ENCODE measurements at regions of chr2 and their contacts with region 1.

Region 1: GRCh38 chr2:177195194-177195593 is 17.4 kb upstream of the HNRNPA3 start:
- DNase-seq: no peak
- ATAC-seq: peak in 2 of 4 experiments; percentile 46 to 62
- H3K4me3 ChIP-seq: no peak overlapping the region
- H3K4me3 Mint-ChIP-seq: no peak overlapping the region
- H3K27ac ChIP-seq: no peak overlapping the region
- H3K27ac Mint-ChIP-seq: no peak overlapping the region
- H3K4me1 ChIP-seq: no peaks in the 10 kb centered on the region
- H3K4me1 Mint-ChIP-seq: peaks cover 0 to 2% (median 0%) of the 10 kb centered on the region in 3 donors
- H3K27me3 ChIP-seq: no peaks in the 10 kb centered on the region
- H3K27me3 Mint-ChIP-seq: no peaks in the 10 kb centered on the region

Region 2: DNA sequence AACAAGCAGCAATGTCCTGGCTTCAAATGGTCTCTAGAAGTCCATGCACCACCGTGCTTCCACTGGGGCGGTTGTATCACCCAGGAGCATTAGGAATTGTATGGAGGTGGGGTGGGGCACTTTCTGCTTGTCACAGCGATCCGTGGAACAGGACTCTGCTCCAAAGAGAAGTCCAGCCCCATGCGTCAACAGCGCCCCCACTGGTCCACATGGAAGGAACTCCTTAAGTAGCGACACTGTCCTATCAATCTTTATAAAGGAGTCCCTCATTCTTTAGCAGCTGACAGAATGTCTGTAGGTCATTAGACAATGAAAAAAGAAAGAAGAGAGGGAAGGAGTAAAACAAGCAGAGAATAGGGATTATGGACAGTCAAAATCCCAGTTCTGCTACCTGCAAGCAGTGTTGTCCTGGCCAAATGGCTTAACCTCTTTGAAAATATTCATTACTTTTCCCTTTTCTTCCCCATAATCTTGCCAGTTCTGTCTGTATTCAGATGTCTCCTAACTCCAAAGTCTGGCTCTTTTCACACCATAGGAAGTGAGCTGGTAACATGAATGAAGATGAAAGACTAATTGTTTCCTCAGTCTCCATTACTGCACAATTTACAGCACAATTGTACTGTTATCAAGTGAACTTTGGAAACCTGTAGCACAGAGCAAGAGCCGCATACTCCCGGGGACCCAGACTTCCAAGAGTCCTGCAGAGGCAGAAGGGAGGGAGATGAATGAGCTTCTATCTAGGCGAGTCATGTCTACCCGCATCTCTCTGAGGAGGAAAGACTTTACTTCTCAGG is 59.4 kb after region 1 on chr2:
- CTCF ChIA-PET with region 1: interaction called in 1 of 2 experiments, 10 read pairs
- POLR2A ChIA-PET with region 1: no interaction called
- DNase-seq: peak in 3 of 35 experiments; percentile 10 to 25 (median 14)
- ATAC-seq: no peak
- H3K4me3 ChIP-seq: no peak overlapping the region
- H3K4me3 Mint-ChIP-seq: peak overlapping the region in 2 of 3 donors; percentile 6 to 96
- H3K27ac ChIP-seq: no peak overlapping the region
- H3K27ac Mint-ChIP-seq: peak overlapping the region; percentile 4 to 5
- H3K4me1 ChIP-seq: peaks cover 49 to 65% of the 10 kb centered on the region in 2 experiments
- H3K4me1 Mint-ChIP-seq: peaks cover 90 to 97% (median 96%) of the 10 kb centered on the region in 3 donors
- H3K27me3 ChIP-seq: no peaks in the 10 kb centered on the region
- H3K27me3 Mint-ChIP-seq: no peaks in the 10 kb centered on the region

Measured in T-cell (primary cell).